Dendritic cell treated with granulocyte-macrophage colony-stimulating factor and Interleukin-4, amounts not matched to agents 40 ng/mL and 50 ng/mL, for 4 days (primary cell): ENCODE measurements at regions of chr17 and their contacts with region 1.

Region 1: GRCh38 chr17:68794636-68795434 is 160.4 kb downstream of the ABCA8 start:
- H3K4me3 Mint-ChIP-seq: peak overlapping the region; percentile 25
- H3K27ac Mint-ChIP-seq: peak overlapping the region; percentile 88
- H3K4me1 Mint-ChIP-seq: peaks cover 67% of the 10 kb centered on the region
- H3K27me3 Mint-ChIP-seq: no peaks in the 10 kb centered on the region

Region 2: GRCh38 chr17:68829211-68829610 is 34.4 kb after region 1 on chr17:
- intact Hi-C with region 1: loop called (anchors 5 kb)
- H3K4me3 Mint-ChIP-seq: no peak overlapping the region
- H3K27ac Mint-ChIP-seq: peak overlapping the region; percentile 87
- H3K4me1 Mint-ChIP-seq: peaks cover 56% of the 10 kb centered on the region
- H3K27me3 Mint-ChIP-seq: no peaks in the 10 kb centered on the region

Region 3: GRCh38 chr17:68910251-68910705 is 115.4 kb after region 1 on chr17:
- intact Hi-C with region 1: loop called (anchors 2 kb)
- H3K4me3 Mint-ChIP-seq: no peak overlapping the region
- H3K27ac Mint-ChIP-seq: peak overlapping the region; percentile 87
- H3K4me1 Mint-ChIP-seq: peaks cover 41% of the 10 kb centered on the region
- H3K27me3 Mint-ChIP-seq: no peaks in the 10 kb centered on the region

Region 4: DNA sequence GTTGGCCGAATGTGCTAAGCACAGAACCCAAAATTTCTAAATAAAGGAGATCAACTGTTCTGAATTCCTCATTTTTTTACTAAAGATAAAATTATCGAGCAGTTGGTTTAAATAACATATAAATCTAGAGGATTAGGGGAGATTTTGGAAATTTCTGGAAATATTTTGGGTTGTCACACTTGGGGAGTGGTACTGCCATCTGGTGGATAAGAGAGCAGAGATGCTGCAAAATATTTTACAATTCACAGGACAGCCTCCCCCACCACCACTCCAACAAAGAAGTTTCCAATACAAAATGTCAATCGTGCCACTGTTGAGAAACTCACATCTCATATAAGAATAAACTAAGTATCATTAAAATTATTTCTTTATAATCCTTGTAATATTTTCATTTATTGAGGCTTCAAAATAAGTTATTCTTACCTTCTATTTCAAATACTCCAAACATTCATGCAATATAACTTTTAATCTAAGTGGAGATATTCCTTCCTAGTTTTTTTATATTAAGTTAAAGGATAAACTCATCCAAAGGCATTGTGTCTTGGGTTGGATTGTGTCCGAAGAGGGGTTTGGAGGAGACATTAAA is 177.4 kb after region 1 on chr17:
- intact Hi-C with region 1: loop called (anchors 2 kb)
- H3K4me3 Mint-ChIP-seq: no peak overlapping the region
- H3K27ac Mint-ChIP-seq: no peak overlapping the region
- H3K4me1 Mint-ChIP-seq: peaks cover 34% of the 10 kb centered on the region
- H3K27me3 Mint-ChIP-seq: peaks cover 4% of the 10 kb centered on the region